ENCODE measurements at regions of chr17 and their contacts with region 1.

Region 1: GRCh38 chr17:1908699-1909309 is 79.0 kb downstream of the RPA1 start:
- DNase-seq: peak; percentile 74
- H3K4me3 ChIP-seq: peak overlapping the region; percentile 21
- CTCF ChIP-seq: peak; percentile 75

Region 2: DNA sequence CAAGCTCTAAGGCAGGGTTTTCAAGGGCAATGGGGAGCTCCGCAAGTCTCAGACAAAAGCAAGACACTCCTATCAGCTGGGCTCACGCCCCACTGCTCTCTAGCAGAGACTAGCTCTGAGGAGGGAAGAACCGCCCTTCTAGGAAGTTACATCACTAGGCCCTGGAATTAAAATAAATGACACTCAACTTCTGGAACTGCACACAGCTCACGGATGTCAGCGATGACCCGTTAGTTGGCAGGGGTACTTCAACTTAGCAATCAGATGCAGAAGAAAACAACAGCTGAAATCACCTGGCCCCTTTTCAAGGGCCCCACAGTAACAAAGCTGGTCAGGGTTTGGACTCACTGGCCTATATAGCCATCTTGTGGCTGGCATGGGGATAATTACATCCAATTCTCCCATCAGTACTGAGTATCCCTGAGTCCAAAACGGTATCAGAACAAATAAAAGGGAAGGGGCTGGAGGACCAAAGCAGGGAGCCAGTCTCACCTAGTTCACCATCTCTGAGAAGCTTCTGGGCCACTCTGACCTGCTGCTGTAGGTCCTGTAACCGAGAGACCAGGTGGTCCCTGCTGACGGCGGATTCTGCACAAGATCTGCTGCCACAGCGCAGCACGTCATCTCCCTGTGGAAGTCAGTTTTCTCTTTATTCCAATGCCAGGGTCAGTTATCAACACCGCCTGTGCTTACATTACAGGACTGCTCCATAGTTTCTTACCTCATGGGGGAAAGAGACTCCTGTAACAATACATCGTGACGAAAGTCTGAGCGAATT is 124.8 kb before region 1 on chr17:
- in situ Hi-C with region 1: no loop called
- DNase-seq: peak; percentile 91
- H3K4me3 ChIP-seq: no peak overlapping the region
- CTCF ChIP-seq: peak; percentile 73

Region 3: GRCh38 chr17:1999557-2000251 is 90.9 kb after region 1 on chr17:
- in situ Hi-C with region 1: no loop called
- DNase-seq: no peak
- H3K4me3 ChIP-seq: no peak overlapping the region
- CTCF ChIP-seq: no peak

Region 4: GRCh38 chr17:2041561-2042366 is 133.0 kb after region 1 on chr17 and contains the start of gene OVCA2:
- in situ Hi-C with region 1: loop called (anchors 25 kb)
- DNase-seq: peak; percentile 95
- H3K4me3 ChIP-seq: peak within 1 kb of the TSS; percentile 80
- CTCF ChIP-seq: peak; percentile 59

Measured in astrocyte of the spinal cord (primary cell).